Esophagus squamous epithelium (tissue), 5 donors: ENCODE measurements at regions of chr6 and their contacts with region 1.

Region 1: GRCh38 chr6:110815217-110816109 is at the start of gene CDK19:
- DNase-seq: peak; percentile 96
- H3K4me3 ChIP-seq: peak within 1 kb of the TSS; percentile 77 to 98 (median 86)
- H3K27ac ChIP-seq: peak within 1 kb of the TSS; percentile 94 to 97 (median 96)
- H3K4me1 ChIP-seq: peaks cover 11 to 47% (median 24%) of the 10 kb centered on the region in 3 donors
- H3K27me3 ChIP-seq: no peaks in the 10 kb centered on the region
- CTCF ChIP-seq: peak in 1 of 6 experiments; percentile 5
- POLR2A ChIP-seq: peak in 3 of 4 donors; percentile 43 to 79 (median 78)
- total RNA-seq, gene CDK19: 10.8 to 13.2 (median 12.1) TPM

Region 2: GRCh38 chr6:110876170-110876773 is 60.8 kb after region 1 on chr6:
- intact Hi-C with region 1: loop called (anchors 5 kb)
- DNase-seq: peak; percentile 33
- H3K4me3 ChIP-seq: peak overlapping the region; percentile 90 to 94 (median 92)
- H3K27ac ChIP-seq: peak overlapping the region; percentile 91 to 97 (median 94)
- H3K4me1 ChIP-seq: peaks cover 20 to 60% (median 46%) of the 10 kb centered on the region in 3 donors
- H3K27me3 ChIP-seq: no peaks in the 10 kb centered on the region
- CTCF ChIP-seq: no peak
- POLR2A ChIP-seq: peak in 2 of 4 donors; percentile 87